WTC11 (cell line): ENCODE measurements at regions of chr1 and their contacts with region 1.

Region 1: DNA sequence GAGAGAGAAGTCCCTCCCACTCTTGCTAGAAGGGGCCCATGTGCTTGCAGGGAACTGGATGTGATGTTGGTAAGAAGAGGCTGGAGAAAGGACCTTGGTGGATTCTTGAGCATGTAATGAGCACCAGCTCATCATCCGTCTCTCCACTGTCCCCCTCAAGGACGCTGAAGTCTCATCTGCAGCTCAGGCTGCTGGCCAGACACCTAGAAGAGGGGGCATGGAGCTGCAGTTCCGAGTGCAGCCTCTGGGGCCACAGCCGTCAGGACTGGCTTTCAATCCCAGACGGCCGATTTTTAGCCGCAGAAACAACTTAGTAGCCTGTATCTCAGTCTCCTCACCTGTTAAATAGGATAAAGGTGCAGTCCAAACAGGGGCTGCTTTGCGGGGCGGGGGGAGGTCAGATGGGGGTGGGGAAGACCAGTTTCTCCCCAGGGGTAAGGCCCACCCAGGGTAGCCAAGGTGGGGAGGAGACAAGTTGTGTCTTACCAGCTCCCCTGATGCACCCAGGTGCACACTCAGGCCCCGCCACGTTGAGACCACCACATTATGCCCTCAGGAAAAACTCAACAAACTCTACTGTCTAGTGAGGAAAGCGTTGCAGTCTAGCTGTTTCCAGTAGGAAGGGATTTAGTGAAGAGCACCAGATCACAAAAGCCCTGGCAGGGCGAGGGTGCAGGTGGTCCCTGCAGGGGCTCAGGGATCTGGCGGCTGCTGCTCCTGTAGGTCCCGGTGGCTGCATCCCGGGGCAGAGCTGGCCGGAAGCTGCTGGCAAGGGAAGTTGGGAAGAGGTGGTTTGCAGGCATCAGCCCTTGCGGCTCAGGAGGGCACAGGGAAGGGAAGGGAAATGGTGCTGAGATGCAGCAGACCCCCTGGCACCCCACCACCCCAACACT is 29.5 kb downstream of the LDLRAP1 start:
- DNase-seq: peak; percentile 80
- ATAC-seq: peak; percentile 73
- H3K4me3 Mint-ChIP-seq: no peak overlapping the region
- H3K27ac Mint-ChIP-seq: no peak overlapping the region
- H3K4me1 Mint-ChIP-seq: peaks cover 49% of the 10 kb centered on the region
- H3K27me3 Mint-ChIP-seq: no peaks in the 10 kb centered on the region; the same call in 1 of the 2 replicates
- CTCF ChIP-seq: peak; percentile 75

Region 2: GRCh38 chr1:25543425-25544242 is 29.3 kb before region 1 on chr1 and contains the start of gene LDLRAP1:
- CTCF ChIA-PET with region 1: interaction called, 17 read pairs
- POLR2A ChIA-PET with region 1: no interaction called
- DNase-seq: peak; percentile 78
- ATAC-seq: peak; percentile 91
- H3K4me3 Mint-ChIP-seq: peak within 1 kb of the TSS; percentile 67
- H3K27ac Mint-ChIP-seq: no peak within 1 kb of the TSS
- H3K4me1 Mint-ChIP-seq: peaks cover 13% of the 10 kb centered on the region
- H3K27me3 Mint-ChIP-seq: peaks cover 12% of the 10 kb centered on the region
- CTCF ChIP-seq: no peak
- total RNA-seq, gene LDLRAP1: 14.1 to 16.3 TPM (median 14.2 TPM) in 3 replicates

Region 3: GRCh38 chr1:25590096-25590824 is 17.3 kb after region 1 on chr1:
- CTCF ChIA-PET with region 1: interaction called, 30 read pairs
- POLR2A ChIA-PET with region 1: no interaction called
- DNase-seq: no peak
- ATAC-seq: 0 out of 2 replicates have a peak, but pooled peaks have one; percentile 10
- H3K4me3 Mint-ChIP-seq: no peak overlapping the region
- H3K27ac Mint-ChIP-seq: peak overlapping the region; percentile 37; the same call in 1 of the 2 replicates
- H3K4me1 Mint-ChIP-seq: peaks cover 43% of the 10 kb centered on the region
- H3K27me3 Mint-ChIP-seq: no peaks in the 10 kb centered on the region
- CTCF ChIP-seq: no peak

Region 4: DNA sequence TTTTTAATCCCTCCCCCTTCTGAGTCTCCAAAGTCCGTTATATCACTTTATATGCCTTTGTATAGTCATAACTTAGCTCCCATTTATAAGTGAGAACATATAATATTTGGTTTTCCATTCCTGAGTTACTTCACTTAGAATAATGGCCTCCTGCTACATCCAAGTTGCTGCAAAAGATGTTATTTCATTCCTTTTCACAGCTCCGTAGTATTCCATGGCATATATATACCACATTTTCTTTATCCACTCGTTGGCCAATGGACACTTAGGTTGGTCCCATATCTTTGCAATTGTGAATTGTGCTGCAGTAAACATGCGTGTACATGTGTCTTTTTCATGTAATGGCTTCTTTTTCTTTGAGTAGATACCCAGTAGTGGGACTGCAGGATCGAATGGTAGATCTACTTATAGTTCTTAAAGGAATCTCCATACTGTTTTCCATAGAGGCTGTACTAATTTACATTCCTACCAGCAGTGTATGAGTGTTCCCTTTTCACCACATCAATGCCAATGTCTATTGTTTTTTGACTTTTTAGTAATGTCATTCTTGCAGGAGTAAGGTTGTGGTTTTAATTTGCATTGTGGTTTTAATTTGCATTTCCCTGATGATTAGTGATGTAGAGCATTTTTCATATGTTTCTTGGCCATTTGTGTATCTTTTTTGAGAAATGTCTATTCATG is 55.9 kb after region 1 on chr1:
- CTCF ChIA-PET with region 1: no interaction called
- POLR2A ChIA-PET with region 1: no interaction called
- DNase-seq: no peak
- ATAC-seq: no peak
- H3K4me3 Mint-ChIP-seq: no peak overlapping the region
- H3K27ac Mint-ChIP-seq: no peak overlapping the region
- H3K4me1 Mint-ChIP-seq: 0 out of 2 replicates have a peak, but pooled peaks cover under 1% of the 10 kb centered on the region
- H3K27me3 Mint-ChIP-seq: no peaks in the 10 kb centered on the region
- CTCF ChIP-seq: no peak

Region 5: DNA sequence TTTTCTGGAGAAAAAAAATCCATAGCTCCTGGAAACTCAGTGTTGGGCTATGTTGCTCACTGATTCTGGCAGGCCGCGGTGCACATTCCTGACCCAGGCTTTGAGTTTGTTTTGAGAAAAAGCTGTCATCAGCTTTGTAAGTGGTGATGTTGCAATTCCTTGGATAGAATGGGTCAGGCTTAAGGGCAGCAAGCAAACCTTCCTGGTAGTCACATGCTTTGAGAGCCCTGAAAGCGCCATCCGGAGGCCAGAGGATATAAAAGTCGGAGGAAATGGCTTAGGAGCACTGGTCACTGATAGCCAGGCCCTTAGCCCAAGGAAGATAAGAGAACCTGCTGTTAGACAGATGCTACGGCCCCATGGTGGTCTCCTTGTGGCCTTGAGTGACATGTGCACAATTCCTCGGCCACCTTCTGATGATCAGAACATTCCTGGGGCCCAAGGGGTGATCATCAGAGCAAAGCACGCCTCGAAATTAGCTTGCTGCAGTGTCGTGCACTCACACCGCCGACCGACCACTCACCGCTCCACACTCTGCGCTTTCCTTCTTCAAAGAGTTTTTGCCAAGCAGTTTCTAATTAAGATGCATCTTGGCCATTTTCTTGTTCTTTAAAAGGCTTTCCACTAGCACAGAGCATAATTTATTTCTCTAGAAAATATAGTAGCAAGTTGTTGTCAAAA is 122.3 kb after region 1 on chr1:
- CTCF ChIA-PET with region 1: interaction called, 10 read pairs
- POLR2A ChIA-PET with region 1: no interaction called
- DNase-seq: peak; percentile 54
- ATAC-seq: peak; percentile 68
- H3K4me3 Mint-ChIP-seq: no peak overlapping the region
- H3K27ac Mint-ChIP-seq: peak overlapping the region; percentile 63
- H3K4me1 Mint-ChIP-seq: peaks cover 43% of the 10 kb centered on the region
- H3K27me3 Mint-ChIP-seq: no peaks in the 10 kb centered on the region
- CTCF ChIP-seq: no peak

Region 6: GRCh38 chr1:25715888-25716287 is 142.9 kb after region 1 on chr1:
- CTCF ChIA-PET with region 1: no interaction called
- POLR2A ChIA-PET with region 1: no interaction called
- DNase-seq: no peak
- ATAC-seq: peak; percentile 68; the same call in 1 of the 2 replicates
- H3K4me3 Mint-ChIP-seq: no peak overlapping the region
- H3K27ac Mint-ChIP-seq: no peak overlapping the region
- H3K4me1 Mint-ChIP-seq: peaks cover 15% of the 10 kb centered on the region
- H3K27me3 Mint-ChIP-seq: no peaks in the 10 kb centered on the region; the same call in 1 of the 2 replicates
- CTCF ChIP-seq: no peak

Region 7: DNA sequence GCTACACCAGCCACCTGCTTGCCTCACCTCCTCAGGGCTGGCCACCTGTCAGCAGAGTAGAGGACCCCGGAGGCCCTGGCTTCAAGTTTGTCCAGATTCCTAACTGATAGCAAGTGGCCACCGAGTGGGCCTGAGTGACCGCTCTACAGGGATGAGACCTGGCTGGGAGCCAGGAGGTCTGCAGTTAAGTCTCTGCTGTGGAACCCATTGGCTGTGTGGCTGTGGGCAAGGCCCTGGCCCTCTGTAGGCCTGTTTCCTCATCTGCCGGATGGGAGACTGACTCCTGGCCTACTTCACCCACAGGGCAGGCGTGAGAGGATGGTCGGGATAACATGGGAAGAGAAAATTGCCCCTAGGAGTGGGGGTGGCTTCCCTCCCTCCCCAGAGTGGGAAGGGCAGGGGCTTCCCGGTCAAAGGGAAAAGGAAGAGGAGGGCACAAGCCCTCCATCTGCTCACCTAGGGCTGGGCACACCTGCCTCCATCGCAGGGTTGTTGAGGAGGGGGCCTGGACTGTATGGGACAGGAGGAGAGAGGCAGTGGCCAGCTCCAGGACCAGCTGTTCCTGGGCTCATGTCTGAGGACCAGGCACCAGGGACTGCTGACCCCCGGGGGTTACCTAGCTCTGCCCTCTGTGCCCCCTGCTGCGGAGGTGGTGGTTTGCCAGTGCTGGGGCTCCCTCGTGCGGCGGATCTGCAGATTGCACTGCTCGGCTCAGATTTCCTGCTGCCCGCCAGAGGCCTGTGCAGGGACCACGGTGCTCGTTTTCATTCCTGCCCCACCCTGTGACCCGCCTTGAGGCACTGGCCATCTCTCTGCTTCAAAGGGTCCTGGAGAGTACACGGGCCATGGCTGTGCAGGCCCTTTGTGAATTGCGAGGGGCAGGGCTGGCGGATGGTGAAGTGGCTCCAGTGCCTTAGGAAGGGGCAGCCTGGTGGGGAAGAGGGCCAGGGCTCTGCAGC is 237.7 kb after region 1 on chr1:
- CTCF ChIA-PET with region 1: interaction called, 15 read pairs
- POLR2A ChIA-PET with region 1: no interaction called
- DNase-seq: peak; percentile 96
- ATAC-seq: peak; percentile 81
- H3K4me3 Mint-ChIP-seq: no peak overlapping the region
- H3K27ac Mint-ChIP-seq: no peak overlapping the region
- H3K4me1 Mint-ChIP-seq: 0 out of 2 replicates have a peak, but pooled peaks cover 3% of the 10 kb centered on the region
- H3K27me3 Mint-ChIP-seq: no peaks in the 10 kb centered on the region
- CTCF ChIP-seq: peak; percentile 90